ENCODE measurements at regions of chr10 and their contacts with region 1.

Region 1: DNA sequence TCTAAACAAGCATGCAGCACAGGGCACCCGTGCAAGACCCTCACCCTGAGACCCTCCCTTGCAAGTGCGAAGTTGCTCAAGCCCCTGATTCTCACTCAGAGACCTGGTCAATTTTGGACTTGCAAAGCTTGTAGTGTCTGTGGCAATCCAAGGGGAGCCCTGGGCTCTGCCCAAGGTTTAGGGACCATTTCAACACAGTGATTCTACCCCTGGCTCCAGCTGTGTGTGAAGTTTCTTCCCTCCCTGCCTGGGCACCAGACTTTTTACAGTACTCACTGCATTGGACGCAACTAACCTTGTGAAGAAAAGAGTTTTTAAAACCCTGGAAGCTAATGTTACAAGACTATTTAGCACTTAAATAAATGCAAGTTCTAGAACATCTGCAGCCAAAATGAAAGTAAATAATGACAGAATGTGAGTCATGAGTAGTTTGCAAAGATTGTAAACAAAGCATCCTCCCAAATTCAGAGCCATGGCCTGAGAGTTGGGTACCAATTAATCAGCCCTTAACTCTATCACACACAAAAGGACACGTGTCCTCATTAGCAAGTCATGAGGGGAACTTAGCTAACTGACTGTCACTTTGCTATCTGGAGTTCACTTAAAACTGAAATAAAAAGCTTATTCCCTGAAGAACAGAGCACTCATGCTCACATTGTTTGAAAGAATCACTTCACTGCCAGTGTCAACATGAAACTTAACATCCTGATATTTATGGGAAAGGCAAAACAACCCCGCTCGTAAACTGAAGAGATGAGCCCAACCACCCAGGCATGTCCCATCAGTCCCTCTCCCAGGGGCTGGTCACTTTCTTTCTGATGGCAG is 48.1 kb downstream of the RGS10 start:
- DNase-seq: no peak
- ATAC-seq: no peak
- H3K4me3 ChIP-seq: no peak overlapping the region
- H3K27ac ChIP-seq: peak overlapping the region in 2 of 12 donors; percentile 2 to 44
- H3K4me1 ChIP-seq: peaks cover 0 to 20% (median 5%) of the 10 kb centered on the region in 12 donors
- H3K27me3 ChIP-seq: no peaks in the 10 kb centered on the region
- CTCF ChIP-seq: no peak
- POLR2A ChIP-seq: no peak

Region 2: GRCh38 chr10:119189811-119190282 is 304.6 kb before region 1 on chr10:
- intact Hi-C with region 1: loop called in 1 of 10 experiments (anchors 5 kb)
- DNase-seq: no peak
- ATAC-seq: no peak
- H3K4me3 ChIP-seq: no peak overlapping the region
- H3K27ac ChIP-seq: no peak overlapping the region
- H3K4me1 ChIP-seq: peaks cover 0 to 20% (median 0%) of the 10 kb centered on the region in 12 donors
- H3K27me3 ChIP-seq: no peaks in the 10 kb centered on the region
- CTCF ChIP-seq: no peak
- POLR2A ChIP-seq: no peak

Region 3: DNA sequence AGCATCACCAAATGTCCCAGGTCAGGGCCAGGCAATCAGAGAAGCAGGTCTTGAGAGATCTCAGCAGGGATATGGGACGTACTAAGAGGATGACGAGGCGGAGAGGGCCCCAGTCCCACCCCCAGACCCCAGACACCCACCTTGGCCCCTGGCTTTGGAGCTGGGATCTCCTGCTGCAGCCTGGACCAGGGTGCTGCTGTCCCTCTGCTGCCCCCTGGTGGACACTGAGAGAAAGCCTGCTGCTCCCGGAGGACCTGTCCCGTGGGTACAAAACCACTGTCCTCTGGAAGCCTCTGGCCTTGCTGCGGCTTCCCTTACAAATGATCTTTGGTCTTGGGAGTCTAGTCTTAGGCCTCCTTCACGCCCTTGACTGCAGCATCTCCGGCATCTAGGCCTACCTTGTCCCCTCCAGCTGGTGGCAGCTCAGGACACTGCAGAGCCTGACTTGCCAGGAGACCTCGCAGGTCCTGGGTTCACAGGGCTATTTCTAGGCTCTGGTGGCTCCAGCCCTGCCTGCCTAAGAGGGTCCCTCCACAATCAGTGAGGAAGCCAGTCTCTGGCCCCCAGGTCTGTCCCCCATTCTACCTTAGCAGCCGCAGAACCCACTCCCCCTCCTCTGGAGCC is 49.0 kb before region 1 on chr10:
- intact Hi-C with region 1: loop called in 1 of 10 experiments (anchors 1 kb)
- DNase-seq: peak; percentile 87 to 91 (median 90)
- ATAC-seq: peak; percentile 55 to 68 (median 66)
- H3K4me3 ChIP-seq: no peak overlapping the region
- H3K27ac ChIP-seq: peak overlapping the region in 7 of 12 donors; percentile 0 to 71 (median 35)
- H3K4me1 ChIP-seq: peaks cover 0 to 42% (median 18%) of the 10 kb centered on the region in 12 donors
- H3K27me3 ChIP-seq: no peaks in the 10 kb centered on the region
- CTCF ChIP-seq: peak; percentile 89 to 99 (median 97)
- POLR2A ChIP-seq: no peak

Measured in heart left ventricle (tissue), 16 donors.